A549 (cell line): ENCODE measurements at regions of chr5 and their contacts with region 1.

Region 1: DNA sequence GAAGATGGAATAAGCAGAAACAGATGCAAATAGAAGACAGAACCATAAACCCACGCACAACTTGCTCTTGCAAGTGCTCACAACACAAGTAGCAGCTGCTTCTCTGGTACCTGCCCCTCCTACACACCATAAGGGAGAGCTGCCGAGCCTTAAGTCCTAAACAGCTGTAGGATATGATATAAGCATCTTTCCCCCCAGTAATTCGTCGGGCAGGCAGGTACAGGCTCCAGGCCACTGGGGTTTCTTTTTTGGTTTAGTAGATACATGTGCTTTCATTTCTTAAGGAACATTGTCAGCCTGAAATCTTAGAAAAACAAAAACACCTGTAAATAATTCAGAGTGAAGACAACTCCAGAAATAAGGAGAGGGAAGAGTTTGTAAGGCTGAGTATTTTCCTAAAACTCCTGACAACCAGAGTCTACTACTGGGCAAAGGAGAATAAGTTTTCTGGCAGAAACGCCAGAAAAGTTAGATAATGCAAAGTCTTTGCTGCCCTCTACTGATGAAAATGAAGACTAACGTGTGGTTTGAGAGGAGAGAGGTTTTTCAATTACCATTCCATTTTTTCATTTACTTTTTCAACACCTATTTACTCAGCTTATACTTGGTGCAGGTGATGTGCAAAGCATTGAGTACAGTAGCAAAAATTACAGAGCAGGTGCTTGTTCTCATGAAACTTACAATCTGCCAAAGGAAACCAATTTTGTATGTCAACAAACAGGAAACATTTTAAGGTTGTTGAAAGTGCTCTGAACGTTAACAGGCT is 20.1 kb upstream of the TCERG1 start:
- DNase-seq: peak; percentile 34 to 38
- ATAC-seq: peak; percentile 70 to 86; a peak in 4 of 6 replicates
- H3K4me3 ChIP-seq: no peak overlapping the region
- H3K27ac ChIP-seq: no peak overlapping the region
- H3K4me1 ChIP-seq: no peaks in the 10 kb centered on the region
- CTCF ChIP-seq: peak; percentile 84
- EP300 ChIP-seq: no peak
- POLR2A ChIP-seq: no peak
- RAD21 ChIP-seq: peak; percentile 88 to 92

Region 2: GRCh38 chr5:146007270-146007669 is 419.8 kb before region 1 on chr5:
- CTCF ChIA-PET with region 1: no interaction called
- POLR2A ChIA-PET with region 1: no interaction called
- DNase-seq: peak in 1 of 2 experiments; percentile 21
- ATAC-seq: peak; percentile 80 to 83
- H3K4me3 ChIP-seq: no peak overlapping the region
- H3K27ac ChIP-seq: 0 out of 6 replicates have a peak overlapping the region, but pooled peaks of 1 of the 2 experiments have one; percentile 14
- H3K4me1 ChIP-seq: peaks cover 10% of the 10 kb centered on the region; the same call in 1 of the 3 replicates
- CTCF ChIP-seq: no peak
- EP300 ChIP-seq: no peak
- POLR2A ChIP-seq: no peak
- RAD21 ChIP-seq: 0 out of 5 replicates have a peak, but pooled peaks have one; percentile 22 to 24

Region 3: GRCh38 chr5:146203011-146203871 is 223.8 kb before region 1 on chr5 and contains the start of gene RBM27:
- CTCF ChIA-PET with region 1: no interaction called
- POLR2A ChIA-PET with region 1: no interaction called
- DNase-seq: peak; percentile 99 to 100
- ATAC-seq: peak; percentile 100
- H3K4me3 ChIP-seq: peak within 1 kb of the TSS; percentile 74
- H3K27ac ChIP-seq: peak within 1 kb of the TSS; percentile 90 to 98
- H3K4me1 ChIP-seq: peaks cover 37% of the 10 kb centered on the region
- CTCF ChIP-seq: no peak
- EP300 ChIP-seq: no peak
- POLR2A ChIP-seq: peak; percentile 46; the same call in 1 of the 2 replicates
- RAD21 ChIP-seq: no peak
- polyA plus RNA-seq, gene RBM27: 23.9 and 27.4 TPM in 2 replicates

Region 4: GRCh38 chr5:146395193-146395592 is 31.8 kb before region 1 on chr5:
- CTCF ChIA-PET with region 1: interaction called, 11 read pairs
- POLR2A ChIA-PET with region 1: no interaction called
- DNase-seq: no peak
- ATAC-seq: no peak
- H3K4me3 ChIP-seq: no peak overlapping the region
- H3K27ac ChIP-seq: no peak overlapping the region
- H3K4me1 ChIP-seq: no peaks in the 10 kb centered on the region
- CTCF ChIP-seq: no peak
- EP300 ChIP-seq: no peak
- POLR2A ChIP-seq: no peak
- RAD21 ChIP-seq: no peak

Region 5: DNA sequence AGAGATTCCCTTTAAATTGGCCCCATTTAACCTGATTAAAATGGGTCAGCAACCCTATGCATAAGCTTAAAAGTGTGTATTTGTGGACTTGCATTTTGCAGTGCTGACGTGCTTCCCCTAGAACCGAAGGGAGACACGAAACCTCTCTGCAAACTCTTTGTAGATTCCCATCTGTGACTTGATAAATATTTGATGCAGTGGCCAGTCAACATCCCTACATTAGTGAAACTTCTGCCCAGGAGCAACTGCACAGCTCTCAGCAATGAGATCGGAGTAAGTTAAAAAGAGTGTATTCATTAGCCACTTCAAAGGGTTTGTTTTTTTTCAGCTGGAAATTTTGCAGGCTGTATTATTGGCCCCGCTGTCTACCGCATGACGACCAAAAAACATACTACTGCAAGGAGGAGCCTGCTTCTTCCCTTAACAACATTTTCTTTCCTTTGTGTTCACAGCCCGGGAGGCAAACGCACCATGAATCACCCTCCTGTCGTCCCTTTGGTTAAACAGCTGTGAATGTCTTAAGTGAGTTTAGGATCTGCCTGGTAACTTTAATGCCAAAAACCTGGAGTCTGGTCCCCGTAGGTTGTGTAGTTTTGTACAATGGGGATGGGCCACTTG is 17.9 kb before region 1 on chr5:
- CTCF ChIA-PET with region 1: interaction called, 12 read pairs
- POLR2A ChIA-PET with region 1: no interaction called
- DNase-seq: peak in 1 of 2 experiments; percentile 7
- ATAC-seq: peak; percentile 68 to 69
- H3K4me3 ChIP-seq: no peak overlapping the region
- H3K27ac ChIP-seq: no peak overlapping the region
- H3K4me1 ChIP-seq: peaks cover 5% of the 10 kb centered on the region; the same call in 1 of the 3 replicates
- CTCF ChIP-seq: no peak
- EP300 ChIP-seq: no peak
- POLR2A ChIP-seq: no peak
- RAD21 ChIP-seq: no peak

Region 6: GRCh38 chr5:146440870-146441495 is 13.9 kb after region 1 on chr5:
- CTCF ChIA-PET with region 1: interaction called, 23 read pairs
- POLR2A ChIA-PET with region 1: no interaction called
- DNase-seq: no peak
- ATAC-seq: peak; percentile 44 to 56; a peak in 4 of 6 replicates
- H3K4me3 ChIP-seq: no peak overlapping the region
- H3K27ac ChIP-seq: no peak overlapping the region
- H3K4me1 ChIP-seq: 0 out of 3 replicates have a peak, but pooled peaks cover 7% of the 10 kb centered on the region
- CTCF ChIP-seq: no peak
- EP300 ChIP-seq: no peak
- POLR2A ChIP-seq: no peak
- RAD21 ChIP-seq: no peak

Region 7: DNA sequence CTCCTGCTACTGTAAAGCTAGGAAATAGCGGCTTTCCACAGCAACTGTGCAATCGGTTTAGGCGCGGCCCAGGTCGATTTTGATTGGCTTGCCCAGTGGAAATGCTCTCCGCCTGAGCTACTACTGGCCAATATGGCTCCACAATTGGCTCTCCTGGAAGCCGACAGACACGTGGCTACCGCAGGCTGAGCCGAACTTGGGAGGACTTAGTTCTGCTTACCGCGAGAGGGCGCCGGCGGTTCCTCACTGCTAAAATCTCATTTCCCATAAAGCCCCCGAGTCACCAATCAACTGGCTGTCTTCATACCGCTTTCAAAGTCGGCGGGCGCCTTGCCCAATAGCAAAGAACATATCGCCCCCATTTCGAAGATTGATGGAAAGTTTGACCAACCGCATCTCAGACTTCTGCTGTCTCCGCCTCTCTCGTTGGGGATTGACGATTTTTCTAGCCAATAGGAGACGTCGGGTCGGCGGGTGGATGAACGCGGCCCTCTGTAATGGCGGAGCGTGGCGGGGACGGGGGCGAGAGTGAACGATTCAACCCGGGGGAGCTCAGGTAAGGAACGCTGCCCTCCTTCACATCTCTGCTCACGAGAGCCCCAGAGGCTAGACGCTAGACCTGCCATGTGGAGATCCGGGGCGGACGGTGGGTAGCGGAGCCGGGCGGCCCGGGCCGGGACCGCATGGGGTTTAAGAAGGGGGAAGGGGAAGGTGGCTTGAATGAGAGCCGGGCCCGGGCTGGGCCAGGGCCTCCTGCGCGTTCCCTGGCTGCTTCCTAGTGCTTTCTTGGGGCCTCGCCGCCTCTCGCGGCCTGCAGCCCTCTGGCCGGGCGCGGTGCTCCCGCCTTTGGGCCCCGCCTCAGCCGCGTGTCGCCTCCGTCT is 20.1 kb after region 1 on chr5 and contains the start of gene TCERG1:
- CTCF ChIA-PET with region 1: interaction called, 11 read pairs
- POLR2A ChIA-PET with region 1: no interaction called
- DNase-seq: peak; percentile 81 to 100
- ATAC-seq: peak; percentile 96 to 97
- H3K4me3 ChIP-seq: peak within 1 kb of the TSS; percentile 73
- H3K27ac ChIP-seq: peak within 1 kb of the TSS; percentile 93 to 96
- H3K4me1 ChIP-seq: peaks cover 20% of the 10 kb centered on the region
- CTCF ChIP-seq: peak; percentile 77
- EP300 ChIP-seq: no peak
- POLR2A ChIP-seq: peak; percentile 44
- RAD21 ChIP-seq: no peak
- polyA plus RNA-seq, gene TCERG1: 73.8 and 83.3 TPM in 2 replicates

Region 8: GRCh38 chr5:146706321-146706975 is 279.4 kb after region 1 on chr5:
- CTCF ChIA-PET with region 1: no interaction called
- POLR2A ChIA-PET with region 1: no interaction called
- DNase-seq: peak in 1 of 2 experiments; percentile 4
- ATAC-seq: no peak; a peak in 1 of 6 replicates
- H3K4me3 ChIP-seq: no peak overlapping the region
- H3K27ac ChIP-seq: no peak overlapping the region
- H3K4me1 ChIP-seq: no peaks in the 10 kb centered on the region
- CTCF ChIP-seq: no peak
- EP300 ChIP-seq: no peak
- POLR2A ChIP-seq: no peak
- RAD21 ChIP-seq: no peak